ENCODE measurements at regions of chr11 and their contacts with region 1.

Region 1: DNA sequence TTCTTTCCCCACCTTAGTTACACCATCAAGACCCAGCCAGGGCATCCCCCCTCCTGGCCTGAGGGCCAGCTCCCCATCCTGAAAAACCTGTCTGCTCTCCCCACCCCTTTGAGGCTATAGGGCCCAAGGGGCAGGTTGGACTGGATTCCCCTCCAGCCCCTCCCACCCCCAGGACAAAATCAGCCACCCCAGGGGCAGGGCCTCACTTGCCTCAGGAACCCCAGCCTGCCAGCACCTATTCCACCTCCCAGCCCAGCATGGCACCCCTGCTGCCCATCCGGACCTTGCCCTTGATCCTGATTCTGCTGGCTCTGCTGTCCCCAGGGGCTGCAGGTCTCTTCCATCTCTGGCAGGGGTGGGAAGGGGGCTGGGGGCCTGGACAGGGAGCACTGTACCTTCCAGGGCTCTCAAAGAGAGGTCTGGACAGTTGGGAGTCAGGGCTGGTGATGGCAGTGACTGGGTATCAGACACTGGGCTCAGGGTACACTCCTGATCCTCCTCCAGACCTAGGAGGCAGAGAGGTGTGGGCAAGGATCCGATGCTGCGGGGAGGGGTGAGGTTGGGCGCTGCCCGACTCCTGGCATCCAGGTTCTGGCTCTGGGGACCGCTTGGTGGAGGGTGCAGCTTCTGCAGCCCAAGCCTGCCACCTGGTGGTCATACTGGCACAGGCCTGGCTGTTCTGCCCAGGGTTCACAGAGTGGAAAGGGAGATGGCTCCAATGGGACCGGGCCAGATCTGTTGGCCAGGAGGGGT is at the start of gene UPK2:
- DNase-seq: peak; percentile 94
- H3K4me3 ChIP-seq: no peak within 1 kb of the TSS
- H3K27ac ChIP-seq: no peak within 1 kb of the TSS
- H3K4me1 ChIP-seq: peaks cover 0 to 4% (median 2%) of the 10 kb centered on the region in 4 donors
- H3K27me3 ChIP-seq: no peaks in the 10 kb centered on the region
- CTCF ChIP-seq: peak; percentile 95 to 96 (median 96)
- EP300 ChIP-seq: no peak
- POLR2A ChIP-seq: no peak
- total RNA-seq, gene UPK2: not detected

Region 2: GRCh38 chr11:118689851-118690552 is 266.3 kb before region 1 on chr11:
- intact Hi-C with region 1: loop called (anchors 1 kb)
- DNase-seq: peak; percentile 90
- H3K4me3 ChIP-seq: peak overlapping the region; percentile 13 to 50 (median 46)
- H3K27ac ChIP-seq: peak overlapping the region; percentile 73 to 82 (median 76)
- H3K4me1 ChIP-seq: peaks cover 0 to 19% (median 17%) of the 10 kb centered on the region in 4 donors
- H3K27me3 ChIP-seq: no peaks in the 10 kb centered on the region
- CTCF ChIP-seq: peak; percentile 79 to 95 (median 82)
- EP300 ChIP-seq: peak in 1 of 4 donors; percentile 41
- POLR2A ChIP-seq: no peak

Region 3: GRCh38 chr11:118907051-118908042 is 48.9 kb before region 1 on chr11:
- intact Hi-C with region 1: loop called (anchors 1 kb)
- DNase-seq: peak; percentile 92
- H3K4me3 ChIP-seq: no peak overlapping the region
- H3K27ac ChIP-seq: peak overlapping the region; percentile 95 to 100 (median 100)
- H3K4me1 ChIP-seq: peaks cover 0 to 68% (median 62%) of the 10 kb centered on the region in 4 donors
- H3K27me3 ChIP-seq: no peaks in the 10 kb centered on the region
- CTCF ChIP-seq: peak; percentile 94 to 99 (median 98)
- EP300 ChIP-seq: no peak
- POLR2A ChIP-seq: no peak

Region 4: DNA sequence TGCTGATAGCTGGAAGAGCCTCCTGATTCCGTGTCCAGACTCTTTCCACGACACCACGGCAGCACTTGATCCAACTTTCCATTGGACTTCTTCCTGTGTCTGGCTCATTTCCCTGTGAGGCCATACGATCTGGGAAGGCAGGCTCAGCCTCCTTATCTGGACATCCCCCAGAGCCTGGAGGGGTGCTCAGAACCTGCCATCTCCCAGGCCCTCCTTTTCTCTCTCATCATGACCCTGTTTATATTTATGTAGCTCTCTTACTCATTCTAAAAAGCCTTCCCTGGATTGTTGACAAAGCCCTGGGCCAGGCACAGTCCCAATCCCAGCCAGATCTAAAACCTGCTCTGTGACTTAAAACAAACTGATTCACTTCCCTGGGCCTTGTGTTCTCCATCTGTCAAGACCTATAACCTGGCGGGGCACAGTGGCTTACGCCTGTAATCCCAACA is 22.7 kb before region 1 on chr11:
- intact Hi-C with region 1: loop called (anchors 2 kb)
- DNase-seq: peak; percentile 86
- H3K4me3 ChIP-seq: no peak overlapping the region
- H3K27ac ChIP-seq: peak overlapping the region; percentile 55 to 83 (median 76)
- H3K4me1 ChIP-seq: peaks cover 0 to 30% (median 26%) of the 10 kb centered on the region in 4 donors
- H3K27me3 ChIP-seq: no peaks in the 10 kb centered on the region
- CTCF ChIP-seq: no peak
- EP300 ChIP-seq: peak in 1 of 4 donors; percentile 51
- POLR2A ChIP-seq: no peak

Region 5: GRCh38 chr11:118939953-118940598 is 16.2 kb before region 1 on chr11:
- intact Hi-C with region 1: loop called (anchors 2 kb)
- DNase-seq: peak; percentile 67
- H3K4me3 ChIP-seq: no peak overlapping the region
- H3K27ac ChIP-seq: no peak overlapping the region
- H3K4me1 ChIP-seq: no peaks in the 10 kb centered on the region
- H3K27me3 ChIP-seq: no peaks in the 10 kb centered on the region
- CTCF ChIP-seq: no peak
- EP300 ChIP-seq: no peak
- POLR2A ChIP-seq: no peak

Measured in sigmoid colon (tissue), 7 donors.